ENCODE measurements at regions of chr9 and their contacts with region 1.

Region 1: DNA sequence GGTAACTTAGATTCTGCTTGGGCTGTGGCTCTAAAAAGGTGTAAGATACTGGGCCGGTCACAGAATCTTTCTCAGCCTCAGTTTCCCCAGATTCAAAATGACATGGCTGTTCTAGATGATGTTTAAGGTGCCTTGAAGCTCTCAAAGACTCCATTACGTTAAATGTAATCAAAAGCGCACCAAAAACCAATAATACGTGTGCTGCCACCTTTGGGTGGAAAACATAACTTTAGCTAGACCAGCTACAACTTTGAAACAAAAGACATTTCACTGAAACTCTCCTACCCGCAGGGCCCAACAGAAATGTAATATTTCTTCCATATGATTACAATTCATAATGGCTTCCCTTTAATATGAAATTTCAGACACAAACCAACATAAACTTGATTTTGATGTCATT is 35.0 kb upstream of the PCSK5 start:
- DNase-seq: no peak
- H3K4me3 ChIP-seq: no peak overlapping the region
- H3K27ac ChIP-seq: no peak overlapping the region
- H3K4me1 ChIP-seq: no peaks in the 10 kb centered on the region
- H3K27me3 ChIP-seq: no peaks in the 10 kb centered on the region
- CTCF ChIP-seq: peak; percentile 67

Region 2: GRCh38 chr9:75197561-75197960 is 657.9 kb before region 1 on chr9:
- intact Hi-C with region 1: loop called (anchors 10 kb)
- DNase-seq: no peak
- H3K4me3 ChIP-seq: no peak overlapping the region
- H3K27ac ChIP-seq: no peak overlapping the region
- H3K4me1 ChIP-seq: no peaks in the 10 kb centered on the region
- H3K27me3 ChIP-seq: no peaks in the 10 kb centered on the region
- CTCF ChIP-seq: no peak

Region 3: GRCh38 chr9:75333624-75334023 is 521.9 kb before region 1 on chr9:
- intact Hi-C with region 1: loop called (anchors 5 kb)
- DNase-seq: no peak
- H3K4me3 ChIP-seq: no peak overlapping the region
- H3K27ac ChIP-seq: no peak overlapping the region
- H3K4me1 ChIP-seq: no peaks in the 10 kb centered on the region
- H3K27me3 ChIP-seq: no peaks in the 10 kb centered on the region
- CTCF ChIP-seq: peak; percentile 62